PC-3 (cell line): ENCODE measurements at regions of chr6 and their contacts with region 1.

Region 1: DNA sequence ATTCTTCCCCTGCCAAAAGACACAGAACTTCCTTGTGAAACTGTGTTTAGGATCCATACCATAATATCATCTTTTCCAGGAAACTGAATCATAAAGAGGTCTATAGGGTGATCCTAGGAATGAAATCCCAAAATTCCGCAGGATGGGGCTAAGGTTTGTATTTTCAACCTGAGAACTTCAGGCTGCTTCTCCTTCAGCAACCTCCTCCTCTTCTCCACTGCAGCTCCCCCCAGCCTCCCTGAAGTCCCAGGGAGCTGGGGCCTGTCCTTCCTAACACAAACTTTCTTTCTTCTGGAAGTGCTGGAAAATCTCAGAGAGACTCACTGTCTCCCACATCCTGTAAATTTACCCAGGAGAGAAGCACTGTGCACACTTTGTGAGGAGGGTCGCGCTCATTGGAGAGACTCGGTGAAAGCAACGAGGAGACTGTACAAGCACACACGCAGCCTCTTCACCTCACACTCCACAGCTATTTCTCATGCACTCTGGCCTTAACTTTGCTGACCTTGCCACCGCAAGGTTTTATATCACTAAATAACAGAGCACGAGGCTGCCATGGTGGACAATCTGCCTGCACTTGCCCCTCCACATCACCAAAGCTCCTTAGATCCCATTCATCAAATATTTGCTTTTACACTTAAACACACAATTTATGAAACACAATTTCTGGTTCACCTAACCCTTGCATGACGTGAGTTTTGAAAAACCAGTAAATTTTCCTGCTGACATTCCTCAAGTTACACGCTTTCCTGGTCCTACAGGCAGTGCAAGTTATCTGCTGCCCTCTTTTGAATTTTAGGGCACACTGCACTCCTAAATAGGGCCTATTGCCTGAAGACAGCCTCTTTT is 14.3 kb downstream of the ID4 start:
- DNase-seq: peak; percentile 90
- ATAC-seq: peak; percentile 93
- H3K4me3 ChIP-seq: peak overlapping the region; percentile 28; the same call in 1 of the 2 replicates
- H3K27ac ChIP-seq: peak overlapping the region; percentile 65
- H3K4me1 ChIP-seq: peaks cover 11% of the 10 kb centered on the region
- H3K27me3 ChIP-seq: no peaks in the 10 kb centered on the region
- CTCF ChIP-seq: peak; percentile 96

Region 2: GRCh38 chr6:18551228-18551627 is 1300.2 kb before region 1 on chr6:
- CTCF ChIA-PET with region 1: no interaction called
- POLR2A ChIA-PET with region 1: no interaction called
- intact Hi-C with region 1: no loop called
- DNase-seq: peak; percentile 33
- ATAC-seq: no peak; the same call in 1 of the 2 replicates
- H3K4me3 ChIP-seq: no peak overlapping the region
- H3K27ac ChIP-seq: no peak overlapping the region
- H3K4me1 ChIP-seq: no peaks in the 10 kb centered on the region
- H3K27me3 ChIP-seq: peaks cover 31% of the 10 kb centered on the region
- CTCF ChIP-seq: no peak

Region 3: GRCh38 chr6:18997375-18997826 is 854.1 kb before region 1 on chr6:
- CTCF ChIA-PET with region 1: no interaction called
- POLR2A ChIA-PET with region 1: no interaction called
- intact Hi-C with region 1: loop called (anchors 1 kb)
- DNase-seq: peak; percentile 79
- ATAC-seq: peak; percentile 97
- H3K4me3 ChIP-seq: no peak overlapping the region
- H3K27ac ChIP-seq: no peak overlapping the region
- H3K4me1 ChIP-seq: no peaks in the 10 kb centered on the region
- H3K27me3 ChIP-seq: peaks cover 4% of the 10 kb centered on the region; the same call in 1 of the 2 replicates
- CTCF ChIP-seq: peak; percentile 86

Region 4: GRCh38 chr6:19204443-19204842 is 647.0 kb before region 1 on chr6:
- CTCF ChIA-PET with region 1: no interaction called
- POLR2A ChIA-PET with region 1: no interaction called
- intact Hi-C with region 1: loop called (anchors 2 kb)
- DNase-seq: peak; percentile 28
- ATAC-seq: no peak
- H3K4me3 ChIP-seq: no peak overlapping the region
- H3K27ac ChIP-seq: no peak overlapping the region
- H3K4me1 ChIP-seq: peaks cover 6% of the 10 kb centered on the region
- H3K27me3 ChIP-seq: no peaks in the 10 kb centered on the region
- CTCF ChIP-seq: peak; percentile 56

Region 5: GRCh38 chr6:19812512-19813119 is 38.8 kb before region 1 on chr6:
- CTCF ChIA-PET with region 1: no interaction called
- POLR2A ChIA-PET with region 1: no interaction called
- intact Hi-C with region 1: loop called (anchors 1 kb)
- DNase-seq: peak; percentile 60
- ATAC-seq: peak; percentile 70
- H3K4me3 ChIP-seq: no peak overlapping the region
- H3K27ac ChIP-seq: no peak overlapping the region
- H3K4me1 ChIP-seq: no peaks in the 10 kb centered on the region
- H3K27me3 ChIP-seq: no peaks in the 10 kb centered on the region
- CTCF ChIP-seq: peak; percentile 81